Common myeloid progenitor, CD34-positive (primary cell): ENCODE measurements at regions of chr9 and their contacts with region 1.

Region 1: DNA sequence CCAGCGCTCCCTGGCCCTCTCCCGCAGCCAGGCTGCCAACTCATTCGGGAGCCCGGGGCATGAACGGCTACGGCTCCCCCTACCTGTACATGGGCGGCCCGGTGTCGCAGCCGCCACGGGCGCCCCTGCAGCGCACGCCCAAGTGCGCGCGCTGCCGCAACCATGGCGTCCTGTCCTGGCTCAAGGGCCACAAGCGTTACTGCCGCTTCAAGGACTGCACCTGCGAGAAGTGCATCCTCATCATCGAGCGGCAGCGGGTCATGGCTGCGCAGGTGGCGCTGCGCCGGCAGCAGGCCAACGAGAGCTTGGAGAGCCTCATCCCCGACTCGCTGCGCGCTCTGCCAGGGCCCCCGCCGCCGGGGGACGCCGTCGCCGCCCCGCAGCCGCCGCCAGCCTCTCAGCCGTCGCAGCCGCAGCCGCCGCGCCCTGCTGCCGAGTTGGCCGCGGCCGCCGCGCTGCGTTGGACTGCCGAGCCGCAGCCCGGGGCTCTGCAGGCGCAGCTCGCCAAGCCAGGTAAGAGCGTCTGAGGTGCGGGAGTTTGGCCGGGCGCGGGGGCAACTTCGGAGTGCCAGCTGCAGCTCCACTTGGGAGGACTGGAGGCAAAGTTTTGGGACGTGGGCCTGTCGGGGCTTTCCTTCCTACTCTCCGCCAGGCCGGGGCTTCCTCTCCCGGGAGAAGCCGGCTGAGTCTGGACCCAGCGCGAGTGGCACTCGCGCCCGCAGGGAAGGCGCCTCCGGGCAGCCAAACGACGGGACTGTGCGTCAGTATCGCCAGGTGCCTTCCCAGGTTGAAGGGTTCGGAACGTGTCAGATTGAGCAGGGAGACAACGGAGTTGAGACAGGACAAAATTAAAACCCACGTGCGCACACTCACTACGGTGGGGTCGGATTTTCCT is 735 bp downstream of the DMRT3 start:
- DNase-seq: peak in 1 of 3 donors; percentile 50
- H3K4me3 ChIP-seq: peak overlapping the region in 4 of 7 experiments; percentile 28 to 45 (median 34)
- H3K27ac ChIP-seq: no peak overlapping the region
- H3K4me1 ChIP-seq: peaks cover 0 to 16% (median 7%) of the 10 kb centered on the region in 4 experiments
- H3K27me3 ChIP-seq: peaks cover 50 to 98% (median 77%) of the 10 kb centered on the region in 5 experiments

Region 2: GRCh38 chr9:726059-726458 is 251.1 kb before region 1 on chr9:
- CTCF ChIA-PET with region 1: no interaction called
- POLR2A ChIA-PET with region 1: no interaction called
- DNase-seq: no peak
- H3K4me3 ChIP-seq: no peak overlapping the region
- H3K27ac ChIP-seq: no peak overlapping the region
- H3K4me1 ChIP-seq: no peaks in the 10 kb centered on the region
- H3K27me3 ChIP-seq: no peaks in the 10 kb centered on the region

Region 3: DNA sequence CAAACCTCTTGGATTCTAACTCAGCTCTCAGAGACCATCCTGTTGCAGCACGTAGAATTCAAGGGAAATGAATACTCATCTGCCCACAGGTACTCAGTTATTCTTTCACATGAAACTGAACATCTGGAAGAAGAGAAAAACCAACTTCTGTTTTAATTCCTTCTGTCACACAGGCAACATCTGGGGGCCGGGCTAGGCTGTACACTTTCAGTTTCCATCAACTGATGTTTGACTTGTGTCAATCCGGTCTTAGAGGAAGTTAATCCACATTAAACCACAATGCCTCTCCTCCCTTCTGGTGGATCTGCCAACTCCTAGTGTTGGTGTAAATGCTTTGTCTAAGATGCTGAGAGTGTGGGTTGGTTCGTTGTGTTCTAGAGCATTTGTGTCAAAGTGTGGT is 16.8 kb after region 1 on chr9:
- CTCF ChIA-PET with region 1: interaction called, 22 read pairs
- POLR2A ChIA-PET with region 1: no interaction called
- DNase-seq: no peak
- H3K4me3 ChIP-seq: no peak overlapping the region
- H3K27ac ChIP-seq: no peak overlapping the region
- H3K4me1 ChIP-seq: no peaks in the 10 kb centered on the region
- H3K27me3 ChIP-seq: peaks cover 4 to 58% (median 22%) of the 10 kb centered on the region in 5 experiments